ENCODE measurements at regions of chr2 and their contacts with region 1.

Region 1: DNA sequence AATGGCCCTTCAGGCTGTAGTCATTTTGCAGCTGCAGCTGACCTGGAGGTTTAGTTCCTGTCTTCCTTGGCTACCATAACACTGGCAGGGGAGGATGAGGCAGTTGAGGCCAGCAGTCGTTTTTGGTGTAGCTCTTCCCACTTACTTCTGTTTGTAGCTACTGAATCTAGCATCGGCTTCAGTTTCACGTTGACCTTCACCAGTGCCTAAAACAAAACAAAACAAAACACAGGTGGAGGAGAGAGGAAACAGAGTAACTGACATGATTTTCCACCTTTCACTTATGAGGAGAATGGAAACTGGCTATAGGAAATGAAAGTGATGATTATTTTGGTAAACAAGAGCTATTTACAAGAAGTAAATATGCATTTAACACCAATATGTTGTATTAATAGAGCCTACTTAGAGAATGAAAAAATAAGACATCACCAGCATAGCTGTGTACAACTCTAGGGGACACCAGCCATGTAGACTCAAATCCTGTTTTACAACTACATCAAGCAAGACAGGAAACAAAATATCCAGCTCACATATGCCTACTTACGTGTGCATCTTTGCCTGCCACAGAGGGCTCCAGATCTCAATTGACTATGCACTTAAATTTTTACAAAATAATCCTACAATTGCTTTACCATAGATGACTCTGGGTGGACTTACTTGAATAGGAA is 236.9 kb downstream of the AGPS start:
- DNase-seq: no peak
- H3K4me3 ChIP-seq: peak overlapping the region in 1 of 59 donors; percentile 19
- H3K27ac ChIP-seq: peak overlapping the region in 27 of 59 donors; percentile 9 to 81 (median 51)
- H3K27me3 ChIP-seq: no peaks in the 10 kb centered on the region
- CTCF ChIP-seq: no peak

Region 2: DNA sequence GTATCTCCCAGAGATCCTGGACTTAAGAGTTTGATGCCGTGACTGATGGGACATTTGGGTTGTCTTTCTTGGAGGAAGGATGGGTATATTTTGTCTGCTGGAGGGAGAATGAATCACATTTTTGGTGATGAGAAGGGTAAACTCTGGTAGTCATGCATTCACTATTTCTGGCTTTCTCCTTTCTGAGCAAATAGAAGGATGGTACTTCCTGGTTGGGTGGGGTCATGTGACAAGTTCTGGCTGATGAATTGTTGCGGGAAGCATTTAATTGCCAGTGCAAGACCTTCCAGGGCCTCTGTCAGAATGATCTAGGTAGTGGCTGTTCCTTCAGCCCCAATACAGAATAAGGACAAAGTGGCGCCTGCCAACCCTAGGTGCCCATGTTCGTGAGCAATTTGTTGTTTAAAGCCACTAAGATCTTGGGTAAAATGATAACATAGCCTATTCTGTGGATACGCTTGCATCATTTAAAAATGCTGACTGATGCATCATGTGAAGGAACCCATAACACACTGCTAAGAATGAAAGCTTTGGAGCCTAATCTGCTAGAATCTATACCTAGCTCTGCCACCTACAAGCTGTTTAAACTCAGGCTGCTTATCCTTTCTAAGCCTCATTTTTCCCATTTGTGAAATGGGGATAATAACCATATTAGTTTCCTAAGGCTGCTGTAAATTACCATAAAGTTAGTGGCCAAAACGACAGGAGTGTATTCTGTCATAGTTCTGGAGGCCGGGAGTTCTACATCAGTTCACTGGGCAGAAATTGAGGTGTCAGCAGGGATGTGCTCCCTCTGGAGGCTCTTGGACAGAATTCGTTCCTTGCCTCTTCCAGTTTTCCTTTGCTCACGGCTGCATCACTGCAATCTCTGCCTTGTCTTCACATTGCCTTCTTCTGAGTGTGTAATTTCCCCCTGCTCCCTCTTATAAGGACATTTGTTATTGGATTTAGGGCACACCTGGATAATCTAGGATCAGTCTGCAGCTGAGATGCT is 44.4 kb after region 1 on chr2:
- intact Hi-C with region 1: loop called in 1 of 2 experiments (anchors 5 kb)
- DNase-seq: no peak
- H3K4me3 ChIP-seq: no peak overlapping the region
- H3K27ac ChIP-seq: peak overlapping the region in 1 of 59 donors; percentile 6
- H3K27me3 ChIP-seq: peaks cover 0 to 4% (median 0%) of the 10 kb centered on the region in 45 donors
- CTCF ChIP-seq: no peak

Measured in dorsolateral prefrontal cortex (tissue), 120 donors.